ENCODE measurements at regions of chr12 and their contacts with region 1.

Region 1: DNA sequence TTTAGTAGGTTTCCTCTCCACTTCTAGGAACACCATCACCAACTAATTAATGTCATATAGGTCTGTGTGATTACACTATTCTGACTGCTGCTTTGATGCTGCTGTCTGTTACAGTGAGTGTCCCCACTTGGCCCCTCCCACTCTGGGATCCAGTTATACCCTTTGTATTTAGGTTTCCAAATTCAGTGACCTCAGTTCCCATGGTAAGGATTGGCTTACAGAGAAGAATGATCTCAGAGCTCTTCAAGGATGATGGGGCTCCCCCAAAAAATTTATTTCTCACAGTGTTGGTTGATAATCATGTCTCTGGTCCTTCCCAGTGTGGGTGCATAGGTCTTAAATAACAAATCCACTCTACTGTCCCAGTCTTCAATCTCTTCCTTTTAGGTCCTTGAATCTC is 210.0 kb upstream of the MYL2 start:
- DNase-seq: no peak
- H3K4me3 ChIP-seq: no peak overlapping the region
- H3K27ac ChIP-seq: no peak overlapping the region
- H3K4me1 ChIP-seq: no peaks in the 10 kb centered on the region
- H3K27me3 ChIP-seq: no peaks in the 10 kb centered on the region
- CTCF ChIP-seq: no peak

Region 2: DNA sequence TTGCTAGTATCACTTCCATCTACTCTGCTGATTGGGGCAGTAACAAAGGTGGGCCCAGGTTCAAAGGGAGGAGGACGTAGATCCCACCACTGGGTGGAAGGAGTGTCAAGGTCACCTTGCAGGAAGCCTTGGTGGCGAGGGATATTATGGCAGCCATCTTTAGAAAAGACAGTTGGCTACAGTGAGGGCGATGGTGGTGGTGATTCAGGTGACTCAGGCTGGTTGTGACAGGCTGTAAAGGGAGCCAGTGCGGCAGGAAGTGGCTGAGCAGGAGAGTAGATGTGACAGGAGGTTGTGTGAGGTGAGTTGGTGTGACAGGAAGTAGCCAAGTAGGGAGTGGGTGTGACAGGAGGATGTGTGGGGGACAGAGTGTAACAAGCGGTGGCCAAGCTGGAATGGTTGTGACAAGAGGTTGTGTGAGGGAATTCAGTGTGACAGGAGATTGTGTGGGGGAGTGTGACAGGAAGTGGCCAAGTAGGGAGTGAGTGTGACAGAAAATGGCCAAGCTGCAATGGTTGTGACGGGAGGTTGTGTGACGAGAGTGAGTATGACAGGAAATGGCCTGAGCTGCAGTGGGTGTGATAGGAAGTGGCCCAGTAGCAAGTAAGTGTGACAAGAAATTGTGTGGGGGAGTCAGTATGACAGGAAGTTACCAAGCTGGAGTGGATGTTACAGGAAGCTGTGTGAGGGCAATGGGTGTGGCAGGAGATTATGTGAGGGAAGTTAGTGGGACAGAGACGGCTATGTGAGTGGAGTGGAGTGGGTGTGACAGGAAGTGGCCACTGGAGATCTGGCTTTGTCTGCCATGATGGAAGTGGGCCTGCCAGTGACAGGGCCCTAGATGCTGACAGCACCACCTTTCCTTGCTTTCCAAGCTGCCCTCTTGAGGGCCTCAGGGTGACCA is 73.5 kb before region 1 on chr12:
- CTCF ChIA-PET with region 1: no interaction called
- dilution Hi-C with region 1: no loop called
- in situ Hi-C with region 1: no loop called
- intact Hi-C with region 1: no loop called
- DNase-seq: no peak
- H3K4me3 ChIP-seq: no peak overlapping the region
- H3K27ac ChIP-seq: no peak overlapping the region
- H3K4me1 ChIP-seq: no peaks in the 10 kb centered on the region
- H3K27me3 ChIP-seq: no peaks in the 10 kb centered on the region
- CTCF ChIP-seq: no peak

Region 3: DNA sequence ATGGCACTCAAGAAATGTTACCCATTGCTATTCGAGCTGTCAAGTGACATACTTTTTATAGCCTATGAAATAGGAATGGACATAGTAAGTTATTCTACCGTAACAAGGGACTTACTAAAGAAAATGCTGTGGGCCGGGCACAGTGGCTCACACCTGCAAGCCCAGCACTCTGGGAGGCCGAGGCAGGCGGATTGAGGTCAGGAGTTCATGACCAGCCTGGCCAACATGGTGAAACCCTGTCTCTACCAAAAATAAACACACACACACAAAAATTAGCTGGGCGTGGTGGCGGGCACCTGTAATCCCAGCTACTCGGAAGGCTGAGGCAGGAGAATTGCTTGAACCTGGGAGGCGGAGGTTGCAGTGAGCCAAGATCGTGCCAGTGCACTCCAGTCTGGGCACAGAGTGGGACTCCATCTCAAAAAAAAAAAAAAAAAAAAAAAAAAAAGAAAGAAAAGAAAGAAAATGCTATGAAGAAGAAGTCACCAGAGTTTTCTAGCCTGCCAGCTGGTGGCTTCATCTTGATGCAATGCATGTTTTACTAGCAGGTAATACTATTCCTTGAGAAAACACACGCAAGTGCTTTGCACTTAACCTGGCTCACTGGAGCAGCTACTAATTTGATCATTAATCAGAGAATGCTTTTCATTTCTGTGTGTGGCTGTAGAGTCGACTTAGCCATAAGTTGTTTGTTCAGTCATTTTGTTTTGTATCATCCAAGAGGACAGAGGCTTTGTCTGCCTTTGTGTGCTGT is 43.2 kb before region 1 on chr12:
- CTCF ChIA-PET with region 1: no interaction called
- dilution Hi-C with region 1: no loop called
- in situ Hi-C with region 1: no loop called
- intact Hi-C with region 1: no loop called
- DNase-seq: no peak
- H3K4me3 ChIP-seq: no peak overlapping the region
- H3K27ac ChIP-seq: no peak overlapping the region
- H3K4me1 ChIP-seq: no peaks in the 10 kb centered on the region
- H3K27me3 ChIP-seq: peaks cover 8% of the 10 kb centered on the region
- CTCF ChIP-seq: no peak

Region 4: DNA sequence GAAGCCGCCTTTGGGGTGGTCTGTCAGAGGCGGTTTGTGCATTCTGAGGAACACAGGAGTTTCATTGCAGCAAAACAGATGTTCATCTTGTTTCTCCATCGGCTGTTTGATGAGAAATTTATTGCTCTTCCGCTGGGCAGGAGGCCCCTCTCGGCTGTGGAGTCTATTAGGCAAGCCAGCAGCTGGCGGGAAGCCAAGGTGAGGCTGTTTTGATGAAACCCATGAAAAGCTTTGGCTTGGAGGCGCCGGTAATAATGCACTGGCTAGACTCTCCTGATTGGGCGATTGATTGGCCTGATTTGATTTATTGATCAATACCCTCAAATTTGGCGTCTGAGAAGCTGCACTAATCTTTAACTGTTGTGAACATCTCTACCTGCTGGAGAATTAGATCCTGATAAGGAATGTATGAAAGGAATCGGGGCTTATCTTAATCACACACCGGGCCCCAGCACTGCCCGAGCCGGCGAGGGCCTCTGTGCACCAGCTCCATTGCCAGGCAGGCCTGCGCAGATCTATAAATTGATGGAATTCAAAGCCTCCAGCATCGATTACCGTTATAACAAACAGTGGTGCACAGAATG is 50.9 kb after region 1 on chr12:
- CTCF ChIA-PET with region 1: no interaction called
- dilution Hi-C with region 1: loop called (anchors 5 kb)
- in situ Hi-C with region 1: no loop called
- intact Hi-C with region 1: no loop called
- DNase-seq: no peak
- H3K4me3 ChIP-seq: no peak overlapping the region
- H3K27ac ChIP-seq: no peak overlapping the region
- H3K4me1 ChIP-seq: no peaks in the 10 kb centered on the region
- H3K27me3 ChIP-seq: peaks cover 1% of the 10 kb centered on the region
- CTCF ChIP-seq: no peak